OCI-LY7 (cell line): ENCODE measurements at regions of chr20 and their contacts with region 1.

Region 1: DNA sequence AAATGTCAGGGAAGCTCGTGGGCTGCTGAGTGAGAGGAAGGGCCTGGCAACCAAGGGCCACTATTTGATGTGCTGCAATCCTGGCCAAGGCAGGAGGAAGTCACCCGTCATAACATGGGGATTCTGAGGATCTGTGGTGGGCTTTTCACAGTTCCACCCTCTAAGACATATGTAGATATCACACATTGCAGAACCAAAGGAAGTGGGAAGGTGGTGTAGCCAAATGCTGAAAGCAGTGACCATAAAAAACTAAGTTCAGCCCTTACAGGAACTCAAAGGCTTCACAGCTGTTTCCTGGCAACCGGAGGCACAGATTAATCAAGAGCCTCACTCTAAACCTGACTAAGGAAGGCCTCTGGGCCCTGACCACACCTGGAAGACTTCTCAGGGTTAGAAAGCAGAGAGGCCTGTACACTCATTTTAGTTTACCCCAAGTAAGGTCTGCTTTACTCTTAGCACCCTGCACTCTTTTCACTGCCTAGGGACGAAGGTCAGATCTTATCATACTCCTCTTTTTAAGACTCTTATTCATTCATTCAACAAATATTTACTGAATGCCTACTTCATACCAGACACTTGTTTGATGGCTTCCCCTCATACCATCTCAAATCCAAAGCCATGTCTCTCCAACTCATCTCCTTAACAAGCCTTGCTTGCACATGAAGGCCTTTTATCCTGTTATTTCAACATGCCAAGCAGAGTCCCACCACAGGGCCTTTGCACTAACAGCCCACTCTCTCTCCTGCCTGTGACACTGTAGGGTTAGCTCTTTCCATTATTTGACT is 2.6 kb downstream of the UBE2V1 start:
- DNase-seq: peak; percentile 79
- H3K4me3 ChIP-seq: peak overlapping the region; percentile 88
- H3K27ac ChIP-seq: peak overlapping the region; percentile 36
- H3K4me1 ChIP-seq: peaks cover 51% of the 10 kb centered on the region
- CTCF ChIP-seq: no peak

Region 2: DNA sequence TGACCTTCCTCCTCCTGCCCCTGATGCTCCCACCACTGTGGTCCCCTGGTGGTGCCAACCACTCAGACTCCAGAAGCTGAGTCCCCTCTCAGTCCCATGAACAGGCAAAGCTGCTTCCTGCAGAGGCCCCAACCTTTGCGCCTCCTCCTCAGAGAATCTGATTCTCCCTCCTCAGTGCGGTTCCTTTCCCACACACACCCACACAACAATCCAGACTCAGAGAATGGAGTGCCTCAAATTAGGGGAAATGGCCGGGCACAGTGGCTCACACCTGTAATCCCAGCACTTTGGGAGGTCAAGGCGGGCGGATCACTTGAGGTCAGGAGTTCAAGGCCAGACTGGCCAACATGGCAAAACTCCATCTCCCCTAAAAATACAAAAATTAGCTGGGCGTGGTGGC is 558.0 kb after region 1 on chr20:
- CTCF ChIA-PET with region 1: interaction called, 13 read pairs
- POLR2A ChIA-PET with region 1: no interaction called
- intact Hi-C with region 1: no loop called
- DNase-seq: no peak
- H3K4me3 ChIP-seq: no peak overlapping the region
- H3K27ac ChIP-seq: no peak overlapping the region
- H3K4me1 ChIP-seq: peaks cover 16% of the 10 kb centered on the region
- CTCF ChIP-seq: no peak